CD4-positive, alpha-beta memory T cell (primary cell): ENCODE measurements at regions of chr2 and their contacts with region 1.

Region 1: DNA sequence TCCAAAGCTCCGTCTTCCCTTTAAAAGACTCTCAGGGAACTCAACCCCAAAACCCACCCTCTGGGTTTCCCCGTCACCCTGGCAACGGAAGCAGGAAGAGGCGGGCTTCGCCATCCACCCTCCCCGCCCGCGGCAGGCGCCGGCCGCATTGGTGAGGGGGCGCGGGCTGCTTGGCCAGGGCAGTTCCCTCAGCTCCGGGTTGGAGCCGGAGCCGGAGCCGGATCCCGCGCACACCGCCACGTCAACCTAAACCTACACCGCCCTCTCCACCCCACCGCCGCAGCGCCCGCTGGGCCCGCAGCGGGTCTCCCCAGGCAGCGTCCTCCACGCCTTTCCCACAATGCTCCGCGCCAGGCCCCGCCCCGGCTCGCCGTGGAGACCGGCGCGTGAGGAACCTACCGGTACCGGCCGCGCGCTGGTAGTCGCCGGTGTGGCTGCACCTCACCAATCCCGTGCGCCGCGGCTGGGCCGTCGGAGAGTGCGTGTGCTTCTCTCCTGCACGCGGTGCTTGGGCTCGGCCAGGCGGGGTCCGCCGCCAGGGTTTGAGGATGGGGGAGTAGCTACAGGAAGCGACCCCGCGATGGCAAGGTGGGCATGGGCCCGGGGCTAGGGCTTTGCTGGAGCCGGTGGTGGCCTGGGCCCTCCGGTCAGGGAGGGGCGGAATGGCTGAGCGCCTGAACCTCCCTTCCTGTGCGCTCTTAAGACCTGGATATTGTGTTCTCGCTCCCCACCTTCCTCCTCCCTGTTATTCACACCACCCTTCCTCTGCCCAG is at the start of gene DNAJC10:
- DNase-seq: peak; percentile 86 to 92 (median 90)
- H3K4me3 ChIP-seq: peak within 1 kb of the TSS; percentile 83 to 85
- H3K4me3 Mint-ChIP-seq: no peak within 1 kb of the TSS
- H3K27ac ChIP-seq: peak within 1 kb of the TSS; percentile 68
- H3K27ac Mint-ChIP-seq: no peak within 1 kb of the TSS
- H3K4me1 ChIP-seq: peaks cover 25% of the 10 kb centered on the region
- H3K4me1 Mint-ChIP-seq: peaks cover 0 to 11% (median 2%) of the 10 kb centered on the region in 4 donors
- H3K27me3 ChIP-seq: no peaks in the 10 kb centered on the region
- H3K27me3 Mint-ChIP-seq: peaks cover under 1 to 2% of the 10 kb centered on the region in 2 donors
- total RNA-seq, gene DNAJC10: 56.5 to 57.3 TPM

Region 2: GRCh38 chr2:181891966-181892798 is 823.9 kb before region 1 on chr2:
- CTCF ChIA-PET with region 1: no interaction called
- POLR2A ChIA-PET with region 1: no interaction called
- intact Hi-C with region 1: loop called (anchors 5 kb)
- DNase-seq: peak; percentile 58 to 65 (median 60)
- H3K4me3 ChIP-seq: peak overlapping the region; percentile 70 to 86
- H3K4me3 Mint-ChIP-seq: peak overlapping the region; percentile 88 to 95 (median 92)
- H3K27ac ChIP-seq: peak overlapping the region; percentile 44
- H3K27ac Mint-ChIP-seq: peak overlapping the region; percentile 55 to 91 (median 87)
- H3K4me1 ChIP-seq: peaks cover 25% of the 10 kb centered on the region
- H3K4me1 Mint-ChIP-seq: peaks cover 23 to 51% (median 29%) of the 10 kb centered on the region in 4 donors
- H3K27me3 ChIP-seq: no peaks in the 10 kb centered on the region
- H3K27me3 Mint-ChIP-seq: peaks cover 13 to 15% of the 10 kb centered on the region in 2 donors

Region 3: GRCh38 chr2:182666674-182667314 is 49.3 kb before region 1 on chr2:
- CTCF ChIA-PET with region 1: no interaction called
- POLR2A ChIA-PET with region 1: no interaction called
- intact Hi-C with region 1: loop called (anchors 1 kb)
- DNase-seq: peak in 4 of 5 donors; percentile 18 to 36 (median 23)
- H3K4me3 ChIP-seq: no peak overlapping the region
- H3K4me3 Mint-ChIP-seq: no peak overlapping the region
- H3K27ac ChIP-seq: no peak overlapping the region
- H3K27ac Mint-ChIP-seq: no peak overlapping the region
- H3K4me1 ChIP-seq: no peaks in the 10 kb centered on the region
- H3K4me1 Mint-ChIP-seq: peaks cover 0 to 1% (median 0%) of the 10 kb centered on the region in 4 donors
- H3K27me3 ChIP-seq: no peaks in the 10 kb centered on the region
- H3K27me3 Mint-ChIP-seq: peaks cover 0 to 4% of the 10 kb centered on the region in 2 donors

Region 4: GRCh38 chr2:183038341-183039300 is 322.5 kb after region 1 on chr2 and contains the start of gene NCKAP1:
- CTCF ChIA-PET with region 1: no interaction called
- POLR2A ChIA-PET with region 1: interaction called, 4 read pairs
- intact Hi-C with region 1: loop called (anchors 1 kb)
- DNase-seq: peak; percentile 83 to 86 (median 85)
- H3K4me3 ChIP-seq: peak within 1 kb of the TSS; percentile 2 to 66
- H3K4me3 Mint-ChIP-seq: peak within 1 kb of the TSS; percentile 83 to 96 (median 87)
- H3K27ac ChIP-seq: no peak within 1 kb of the TSS
- H3K27ac Mint-ChIP-seq: peak within 1 kb of the TSS; percentile 57 to 87 (median 72)
- H3K4me1 ChIP-seq: peaks cover 37% of the 10 kb centered on the region
- H3K4me1 Mint-ChIP-seq: peaks cover 26 to 38% (median 31%) of the 10 kb centered on the region in 4 donors
- H3K27me3 ChIP-seq: peaks cover 13% of the 10 kb centered on the region
- H3K27me3 Mint-ChIP-seq: peaks cover 22 to 28% of the 10 kb centered on the region in 2 donors
- total RNA-seq, gene NCKAP1: 4.9 to 6.3 TPM

Region 5: DNA sequence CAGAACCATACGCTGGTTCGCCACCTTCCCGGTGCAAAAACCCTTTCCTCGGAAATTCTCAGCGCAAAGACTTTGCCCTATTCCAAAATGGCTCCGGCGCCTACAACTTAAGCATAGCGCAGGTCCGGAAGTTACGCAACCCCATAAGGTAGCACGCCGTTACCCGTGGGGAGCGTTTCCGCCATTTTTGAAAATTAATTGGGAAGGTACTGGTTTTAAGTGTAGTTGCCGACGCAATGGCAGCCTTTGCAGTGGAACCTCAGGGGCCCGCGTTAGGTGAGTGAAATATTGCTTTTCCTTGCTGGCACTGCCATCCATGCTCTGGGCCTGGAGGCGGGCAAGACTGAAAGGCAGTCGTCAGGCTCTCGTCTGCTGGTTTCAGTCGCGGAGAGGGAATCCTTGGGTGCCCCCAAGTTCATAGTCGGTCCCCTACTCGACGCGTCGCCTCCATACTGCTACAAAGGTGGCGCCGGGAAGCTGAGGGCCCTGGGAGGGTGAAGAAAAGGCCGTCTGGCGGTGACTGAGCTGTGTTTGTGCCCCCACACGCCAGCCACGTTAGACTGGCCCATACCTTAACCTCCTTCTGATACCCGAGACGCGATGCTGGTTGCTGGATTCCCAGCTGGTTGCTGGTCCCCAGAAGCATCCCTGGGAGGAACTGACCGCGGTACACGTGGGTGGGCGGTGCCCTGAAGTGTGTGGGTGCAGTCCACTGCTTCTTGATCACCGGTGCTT is 408.3 kb after region 1 on chr2 and contains the start of gene NUP35:
- CTCF ChIA-PET with region 1: no interaction called
- POLR2A ChIA-PET with region 1: no interaction called
- intact Hi-C with region 1: loop called (anchors 1 kb)
- DNase-seq: peak; percentile 85 to 87 (median 87)
- H3K4me3 ChIP-seq: peak within 1 kb of the TSS; percentile 85 to 94
- H3K4me3 Mint-ChIP-seq: peak within 1 kb of the TSS; percentile 93 to 98 (median 96)
- H3K27ac ChIP-seq: peak within 1 kb of the TSS; percentile 73
- H3K27ac Mint-ChIP-seq: peak within 1 kb of the TSS; percentile 97 to 98 (median 98)
- H3K4me1 ChIP-seq: peaks cover 24% of the 10 kb centered on the region
- H3K4me1 Mint-ChIP-seq: peaks cover 18 to 36% (median 31%) of the 10 kb centered on the region in 4 donors
- H3K27me3 ChIP-seq: no peaks in the 10 kb centered on the region
- H3K27me3 Mint-ChIP-seq: peaks cover 6% of the 10 kb centered on the region in 2 donors
- total RNA-seq, gene NUP35: 15.9 to 24.0 TPM